ENCODE measurements at regions of chr3 and their contacts with region 1.

Region 1: GRCh38 chr3:45938864-45939263 is 4.4 kb upstream of the CXCR6 start:
- DNase-seq: peak; percentile 72 to 93 (median 86)
- ATAC-seq: peak; percentile 66
- H3K4me3 ChIP-seq: no peak overlapping the region
- H3K4me3 Mint-ChIP-seq: no peak overlapping the region
- H3K27ac ChIP-seq: no peak overlapping the region
- H3K27ac Mint-ChIP-seq: no peak overlapping the region
- H3K4me1 ChIP-seq: peaks cover 27% of the 10 kb centered on the region
- H3K4me1 Mint-ChIP-seq: peaks cover 39% of the 10 kb centered on the region
- H3K27me3 ChIP-seq: no peaks in the 10 kb centered on the region
- H3K27me3 Mint-ChIP-seq: no peaks in the 10 kb centered on the region
- CTCF ChIP-seq: peak; percentile 63

Region 2: GRCh38 chr3:45507820-45508317 is 431.0 kb before region 1 on chr3:
- CTCF ChIA-PET with region 1: no interaction called
- POLR2A ChIA-PET with region 1: no interaction called
- intact Hi-C with region 1: loop called in 1 of 2 experiments (anchors 2 kb)
- DNase-seq: peak in 2 of 9 experiments; percentile 9 to 20
- ATAC-seq: peak; percentile 42
- H3K4me3 ChIP-seq: no peak overlapping the region
- H3K4me3 Mint-ChIP-seq: no peak overlapping the region
- H3K27ac ChIP-seq: no peak overlapping the region
- H3K27ac Mint-ChIP-seq: no peak overlapping the region
- H3K4me1 ChIP-seq: peaks cover 12% of the 10 kb centered on the region
- H3K4me1 Mint-ChIP-seq: peaks cover 8% of the 10 kb centered on the region
- H3K27me3 ChIP-seq: no peaks in the 10 kb centered on the region
- H3K27me3 Mint-ChIP-seq: no peaks in the 10 kb centered on the region
- CTCF ChIP-seq: no peak

Region 3: GRCh38 chr3:45795882-45796765 is 142.7 kb before region 1 on chr3 and contains the start of gene SLC6A20:
- CTCF ChIA-PET with region 1: no interaction called
- POLR2A ChIA-PET with region 1: no interaction called
- intact Hi-C with region 1: no loop called
- DNase-seq: peak in 4 of 9 experiments; percentile 2 to 49 (median 20)
- ATAC-seq: peak; percentile 57
- H3K4me3 ChIP-seq: peak within 1 kb of the TSS; percentile 28 to 44
- H3K4me3 Mint-ChIP-seq: peak within 1 kb of the TSS; percentile 78
- H3K27ac ChIP-seq: no peak within 1 kb of the TSS
- H3K27ac Mint-ChIP-seq: peak within 1 kb of the TSS; percentile 47
- H3K4me1 ChIP-seq: peaks cover 13% of the 10 kb centered on the region
- H3K4me1 Mint-ChIP-seq: peaks cover 10% of the 10 kb centered on the region
- H3K27me3 ChIP-seq: peaks cover 12 to 17% of the 10 kb centered on the region in 2 experiments
- H3K27me3 Mint-ChIP-seq: peaks cover 50% of the 10 kb centered on the region
- CTCF ChIP-seq: no peak
- total RNA-seq, gene SLC6A20: 0.11 TPM in 1 of 2 experiments, not detected in the other

Region 4: DNA sequence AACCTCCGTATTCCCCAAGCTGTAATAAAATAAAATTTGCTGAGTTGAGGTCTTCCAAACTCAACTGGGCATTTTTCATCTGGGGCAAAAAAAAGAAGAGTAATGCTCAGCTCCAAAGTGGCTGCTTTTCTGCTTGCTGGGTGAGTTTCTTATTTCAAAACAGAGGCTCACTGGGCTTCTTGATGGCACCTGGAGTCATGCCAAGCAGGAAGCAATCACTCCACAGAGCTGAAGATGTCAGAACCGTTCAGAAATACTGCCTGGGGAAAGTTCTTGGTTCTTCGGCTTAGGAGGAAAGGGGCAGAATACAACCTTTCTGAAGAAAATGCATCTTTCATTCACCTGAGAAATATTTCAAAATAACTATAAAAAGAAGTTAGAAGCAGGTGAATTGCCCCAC is 48.5 kb before region 1 on chr3:
- CTCF ChIA-PET with region 1: no interaction called
- POLR2A ChIA-PET with region 1: no interaction called
- intact Hi-C with region 1: no loop called
- DNase-seq: peak in 5 of 9 experiments; percentile 23 to 66 (median 46)
- ATAC-seq: no peak
- H3K4me3 ChIP-seq: no peak overlapping the region
- H3K4me3 Mint-ChIP-seq: peak overlapping the region; percentile 45
- H3K27ac ChIP-seq: no peak overlapping the region
- H3K27ac Mint-ChIP-seq: no peak overlapping the region
- H3K4me1 ChIP-seq: peaks cover 22% of the 10 kb centered on the region
- H3K4me1 Mint-ChIP-seq: peaks cover 57% of the 10 kb centered on the region
- H3K27me3 ChIP-seq: no peaks in the 10 kb centered on the region
- H3K27me3 Mint-ChIP-seq: peaks cover 16% of the 10 kb centered on the region
- CTCF ChIP-seq: no peak

Region 5: DNA sequence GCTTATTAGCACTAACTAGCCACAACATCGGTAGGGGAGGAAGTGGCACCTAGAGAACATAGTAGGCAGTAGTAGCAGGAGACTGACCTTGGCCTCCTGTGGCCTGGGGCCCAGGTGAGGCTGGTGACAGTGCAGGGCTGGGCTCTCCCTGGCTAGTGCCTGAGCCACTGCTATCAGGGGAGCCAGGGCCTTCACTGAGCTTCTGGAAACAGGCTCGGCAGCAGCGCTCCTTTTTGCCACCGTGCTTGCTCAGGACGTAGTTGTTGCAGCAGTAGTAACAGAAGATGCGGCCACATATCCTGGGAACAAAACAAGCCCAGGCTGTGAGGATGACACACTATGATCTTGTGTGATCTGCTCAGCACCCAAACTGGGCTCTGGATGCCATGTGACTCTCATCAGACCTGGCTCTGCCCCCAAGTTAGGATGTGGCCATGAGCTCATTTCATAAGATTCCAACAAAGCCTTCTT is 19.5 kb after region 1 on chr3:
- CTCF ChIA-PET with region 1: interaction called, 60 read pairs
- POLR2A ChIA-PET with region 1: interaction called, 29 read pairs
- intact Hi-C with region 1: no loop called
- DNase-seq: peak in 2 of 9 experiments; percentile 41 to 65
- ATAC-seq: peak; percentile 71
- H3K4me3 ChIP-seq: no peak overlapping the region
- H3K4me3 Mint-ChIP-seq: peak overlapping the region; percentile 45
- H3K27ac ChIP-seq: peak overlapping the region in 1 of 2 experiments; percentile 78
- H3K27ac Mint-ChIP-seq: peak overlapping the region; percentile 79
- H3K4me1 ChIP-seq: peaks cover 4% of the 10 kb centered on the region
- H3K4me1 Mint-ChIP-seq: peaks cover 35% of the 10 kb centered on the region
- H3K27me3 ChIP-seq: no peaks in the 10 kb centered on the region
- H3K27me3 Mint-ChIP-seq: no peaks in the 10 kb centered on the region
- CTCF ChIP-seq: no peak

Region 6: GRCh38 chr3:45978006-45978761 is 39.3 kb after region 1 on chr3:
- CTCF ChIA-PET with region 1: interaction called, 12 read pairs
- POLR2A ChIA-PET with region 1: interaction called, 18 read pairs
- intact Hi-C with region 1: loop called (anchors 1 to 5 kb)
- DNase-seq: peak in 7 of 9 experiments; percentile 29 to 66 (median 57)
- ATAC-seq: no peak
- H3K4me3 ChIP-seq: no peak overlapping the region
- H3K4me3 Mint-ChIP-seq: peak overlapping the region; percentile 47
- H3K27ac ChIP-seq: peak overlapping the region in 1 of 2 experiments; percentile 60
- H3K27ac Mint-ChIP-seq: peak overlapping the region; percentile 93
- H3K4me1 ChIP-seq: peaks cover 46% of the 10 kb centered on the region
- H3K4me1 Mint-ChIP-seq: peaks cover 76% of the 10 kb centered on the region
- H3K27me3 ChIP-seq: no peaks in the 10 kb centered on the region
- H3K27me3 Mint-ChIP-seq: no peaks in the 10 kb centered on the region
- CTCF ChIP-seq: no peak

Region 7: DNA sequence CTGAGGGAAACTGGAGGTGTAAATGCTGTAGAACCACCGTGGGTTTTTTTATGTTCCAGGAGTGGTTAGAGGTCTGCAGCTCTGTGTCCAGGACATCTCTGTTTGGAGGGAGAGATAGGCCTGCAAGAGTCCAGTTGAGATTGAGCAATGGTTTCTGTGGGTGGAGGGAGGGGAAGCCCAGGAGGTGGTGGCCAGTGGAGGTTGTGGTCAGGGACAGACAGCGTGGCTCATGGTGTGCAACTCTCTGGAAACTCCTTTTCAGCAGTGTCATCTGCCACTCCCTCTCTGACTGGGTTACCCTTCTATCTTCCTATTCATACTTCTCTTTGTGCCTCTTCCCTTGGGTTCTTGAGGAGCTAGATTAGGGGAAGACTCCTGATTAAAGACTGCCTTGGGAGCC is 78.9 kb after region 1 on chr3:
- CTCF ChIA-PET with region 1: no interaction called
- POLR2A ChIA-PET with region 1: no interaction called
- intact Hi-C with region 1: no loop called
- DNase-seq: peak in 1 of 9 experiments; percentile 35
- ATAC-seq: no peak
- H3K4me3 ChIP-seq: no peak overlapping the region
- H3K4me3 Mint-ChIP-seq: no peak overlapping the region
- H3K27ac ChIP-seq: no peak overlapping the region
- H3K27ac Mint-ChIP-seq: no peak overlapping the region
- H3K4me1 ChIP-seq: peaks cover 7% of the 10 kb centered on the region
- H3K4me1 Mint-ChIP-seq: peaks cover 10% of the 10 kb centered on the region
- H3K27me3 ChIP-seq: no peaks in the 10 kb centered on the region
- H3K27me3 Mint-ChIP-seq: peaks cover 2% of the 10 kb centered on the region
- CTCF ChIP-seq: no peak

Region 8: GRCh38 chr3:46089237-46090011 is 150.6 kb after region 1 on chr3:
- CTCF ChIA-PET with region 1: interaction called, 24 read pairs
- POLR2A ChIA-PET with region 1: interaction called, 6 read pairs
- intact Hi-C with region 1: no loop called
- DNase-seq: peak in 1 of 9 experiments; percentile 51
- ATAC-seq: no peak
- H3K4me3 ChIP-seq: no peak overlapping the region
- H3K4me3 Mint-ChIP-seq: no peak overlapping the region
- H3K27ac ChIP-seq: no peak overlapping the region
- H3K27ac Mint-ChIP-seq: no peak overlapping the region
- H3K4me1 ChIP-seq: no peaks in the 10 kb centered on the region
- H3K4me1 Mint-ChIP-seq: peaks cover 14% of the 10 kb centered on the region
- H3K27me3 ChIP-seq: no peaks in the 10 kb centered on the region
- H3K27me3 Mint-ChIP-seq: no peaks in the 10 kb centered on the region
- CTCF ChIP-seq: no peak

Region 9: GRCh38 chr3:46378426-46378942 is 439.6 kb after region 1 on chr3:
- CTCF ChIA-PET with region 1: interaction called, 18 read pairs
- POLR2A ChIA-PET with region 1: no interaction called
- intact Hi-C with region 1: loop called (anchors 2 kb)
- DNase-seq: peak; percentile 26 to 76 (median 64)
- ATAC-seq: peak; percentile 53
- H3K4me3 ChIP-seq: no peak overlapping the region
- H3K4me3 Mint-ChIP-seq: no peak overlapping the region
- H3K27ac ChIP-seq: no peak overlapping the region
- H3K27ac Mint-ChIP-seq: peak overlapping the region; percentile 28
- H3K4me1 ChIP-seq: peaks cover 33% of the 10 kb centered on the region
- H3K4me1 Mint-ChIP-seq: peaks cover 60% of the 10 kb centered on the region
- H3K27me3 ChIP-seq: no peaks in the 10 kb centered on the region
- H3K27me3 Mint-ChIP-seq: no peaks in the 10 kb centered on the region
- CTCF ChIP-seq: peak; percentile 55

Measured in CD8-positive, alpha-beta T cell (primary cell).